Activated CD8-positive, alpha-beta T cell treated with anti-CD3 and anti-CD28 coated beads, Interleukin-2, amount 10 ng/mL, durations not matched to agents 7 days and 5 days (primary cell): ENCODE measurements at regions of chr2 and their contacts with region 1.

Region 1: GRCh38 chr2:234288974-234289455 is 207.9 kb downstream of the ARL4C start:
- DNase-seq: peak; percentile 75
- ATAC-seq: no peak
- H3K4me3 Mint-ChIP-seq: no peak overlapping the region
- H3K27ac Mint-ChIP-seq: peak overlapping the region; percentile 97
- H3K4me1 Mint-ChIP-seq: peaks cover 78% of the 10 kb centered on the region
- H3K27me3 Mint-ChIP-seq: no peaks in the 10 kb centered on the region

Region 2: DNA sequence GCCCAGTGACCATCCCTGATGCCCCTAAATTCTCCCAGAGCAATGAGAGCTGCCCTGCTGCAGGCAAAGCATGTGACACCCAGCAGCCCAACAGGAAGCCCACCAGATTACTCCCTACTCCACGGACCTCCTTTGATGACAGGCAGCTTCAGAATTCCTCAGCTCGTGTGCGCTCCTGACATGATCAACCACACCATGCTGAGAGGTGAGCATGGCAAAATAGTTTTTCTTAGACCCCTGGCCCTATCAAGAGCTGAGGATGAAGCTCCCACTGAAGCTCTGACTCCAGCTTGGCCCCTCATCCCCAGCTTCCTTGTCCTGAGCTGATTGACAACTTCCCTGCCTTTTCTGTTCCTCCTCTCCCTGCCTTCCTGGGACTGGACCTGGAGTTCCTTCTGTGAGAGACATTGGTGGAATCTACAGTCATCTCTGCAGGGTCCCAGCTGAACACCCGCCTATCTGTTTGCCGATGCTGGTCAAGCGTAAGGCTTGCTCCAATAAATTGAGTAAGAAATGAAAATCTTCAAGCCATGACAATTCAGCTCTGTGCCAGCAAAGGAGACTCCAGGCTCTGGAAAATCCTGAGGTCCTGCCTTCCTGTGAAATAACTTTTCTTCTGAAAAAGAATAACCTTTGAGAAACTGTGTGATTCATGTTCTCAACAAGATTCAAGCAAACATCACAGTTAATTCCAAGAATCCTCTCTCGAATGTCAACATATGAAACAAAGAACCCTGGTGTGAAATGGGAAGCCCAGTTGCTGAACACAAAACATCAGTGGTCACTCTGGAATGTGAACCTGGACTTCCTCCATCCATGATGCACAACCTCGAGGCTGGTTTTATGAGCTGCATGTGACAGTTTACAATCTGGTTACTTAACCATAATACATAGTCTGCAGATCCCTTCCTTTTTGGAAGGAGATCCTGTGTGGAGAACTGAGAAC is 37.4 kb before region 1 on chr2:
- CTCF ChIA-PET with region 1: no interaction called
- POLR2A ChIA-PET with region 1: no interaction called
- DNase-seq: no peak
- ATAC-seq: no peak
- H3K4me3 Mint-ChIP-seq: no peak overlapping the region
- H3K27ac Mint-ChIP-seq: no peak overlapping the region
- H3K4me1 Mint-ChIP-seq: peaks cover 7% of the 10 kb centered on the region
- H3K27me3 Mint-ChIP-seq: peaks cover 13% of the 10 kb centered on the region

Region 3: DNA sequence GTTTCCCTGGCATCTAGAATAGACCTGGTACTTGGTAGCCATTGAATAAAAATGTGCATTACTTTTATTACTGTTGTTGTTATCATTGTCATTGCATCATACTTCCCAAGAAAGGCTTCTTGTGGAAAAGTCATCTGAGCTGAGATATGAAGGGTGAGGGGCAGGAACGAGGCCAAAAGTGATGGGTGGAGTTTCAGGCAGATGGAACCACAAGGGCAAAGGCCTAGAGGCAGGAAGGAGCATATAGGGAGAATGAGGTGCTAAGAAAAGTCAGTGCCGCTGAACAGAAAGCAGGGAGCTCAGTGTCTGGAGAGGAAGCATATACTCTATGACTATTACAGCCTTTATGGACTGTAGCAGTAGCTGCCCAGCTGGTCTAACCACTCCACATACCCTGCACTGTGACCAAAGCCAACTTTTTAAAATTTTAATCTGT is 19.2 kb before region 1 on chr2:
- CTCF ChIA-PET with region 1: interaction called, 47 read pairs
- POLR2A ChIA-PET with region 1: interaction called, 4 read pairs
- DNase-seq: no peak
- ATAC-seq: no peak
- H3K4me3 Mint-ChIP-seq: no peak overlapping the region
- H3K27ac Mint-ChIP-seq: peak overlapping the region; percentile 31
- H3K4me1 Mint-ChIP-seq: peaks cover 67% of the 10 kb centered on the region
- H3K27me3 Mint-ChIP-seq: no peaks in the 10 kb centered on the region

Region 4: DNA sequence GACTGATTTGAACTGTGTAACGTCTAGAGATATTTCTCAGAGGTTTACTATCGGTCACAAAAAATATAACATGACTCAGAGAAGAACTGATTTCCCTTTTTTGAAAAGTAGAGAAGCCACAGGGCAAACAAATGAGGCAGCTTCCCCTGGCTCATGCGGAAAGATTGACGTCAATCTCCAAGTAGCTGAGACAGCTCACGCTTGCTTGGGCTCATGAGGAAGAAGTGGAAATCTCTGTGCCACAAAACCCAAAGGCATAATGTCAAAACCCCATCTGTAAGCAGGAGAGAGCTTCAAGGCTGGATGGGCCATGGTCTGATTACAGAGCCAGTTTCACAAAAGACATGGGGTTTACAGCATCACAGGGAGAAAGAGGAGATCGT is 19.8 kb after region 1 on chr2:
- CTCF ChIA-PET with region 1: interaction called, 18 read pairs
- POLR2A ChIA-PET with region 1: interaction called, 10 read pairs
- DNase-seq: peak; percentile 81
- ATAC-seq: peak; percentile 91
- H3K4me3 Mint-ChIP-seq: peak overlapping the region; percentile 50
- H3K27ac Mint-ChIP-seq: peak overlapping the region; percentile 93
- H3K4me1 Mint-ChIP-seq: peaks cover 59% of the 10 kb centered on the region
- H3K27me3 Mint-ChIP-seq: no peaks in the 10 kb centered on the region

Region 5: GRCh38 chr2:234446404-234447076 is 157.5 kb after region 1 on chr2:
- CTCF ChIA-PET with region 1: interaction called, 28 read pairs
- POLR2A ChIA-PET with region 1: interaction called, 68 read pairs
- DNase-seq: peak; percentile 94
- ATAC-seq: peak; percentile 90
- H3K4me3 Mint-ChIP-seq: peak overlapping the region; percentile 66
- H3K27ac Mint-ChIP-seq: peak overlapping the region; percentile 99
- H3K4me1 Mint-ChIP-seq: peaks cover 86% of the 10 kb centered on the region
- H3K27me3 Mint-ChIP-seq: no peaks in the 10 kb centered on the region

Region 6: GRCh38 chr2:234483568-234484251 is 194.7 kb after region 1 on chr2:
- CTCF ChIA-PET with region 1: interaction called, 49 read pairs
- POLR2A ChIA-PET with region 1: interaction called, 61 read pairs
- DNase-seq: peak; percentile 94
- ATAC-seq: peak; percentile 89
- H3K4me3 Mint-ChIP-seq: peak overlapping the region; percentile 51
- H3K27ac Mint-ChIP-seq: peak overlapping the region; percentile 87
- H3K4me1 Mint-ChIP-seq: peaks cover 82% of the 10 kb centered on the region
- H3K27me3 Mint-ChIP-seq: no peaks in the 10 kb centered on the region